WTC11 (cell line): ENCODE measurements at regions of chr14 and their contacts with region 1.

Region 1: DNA sequence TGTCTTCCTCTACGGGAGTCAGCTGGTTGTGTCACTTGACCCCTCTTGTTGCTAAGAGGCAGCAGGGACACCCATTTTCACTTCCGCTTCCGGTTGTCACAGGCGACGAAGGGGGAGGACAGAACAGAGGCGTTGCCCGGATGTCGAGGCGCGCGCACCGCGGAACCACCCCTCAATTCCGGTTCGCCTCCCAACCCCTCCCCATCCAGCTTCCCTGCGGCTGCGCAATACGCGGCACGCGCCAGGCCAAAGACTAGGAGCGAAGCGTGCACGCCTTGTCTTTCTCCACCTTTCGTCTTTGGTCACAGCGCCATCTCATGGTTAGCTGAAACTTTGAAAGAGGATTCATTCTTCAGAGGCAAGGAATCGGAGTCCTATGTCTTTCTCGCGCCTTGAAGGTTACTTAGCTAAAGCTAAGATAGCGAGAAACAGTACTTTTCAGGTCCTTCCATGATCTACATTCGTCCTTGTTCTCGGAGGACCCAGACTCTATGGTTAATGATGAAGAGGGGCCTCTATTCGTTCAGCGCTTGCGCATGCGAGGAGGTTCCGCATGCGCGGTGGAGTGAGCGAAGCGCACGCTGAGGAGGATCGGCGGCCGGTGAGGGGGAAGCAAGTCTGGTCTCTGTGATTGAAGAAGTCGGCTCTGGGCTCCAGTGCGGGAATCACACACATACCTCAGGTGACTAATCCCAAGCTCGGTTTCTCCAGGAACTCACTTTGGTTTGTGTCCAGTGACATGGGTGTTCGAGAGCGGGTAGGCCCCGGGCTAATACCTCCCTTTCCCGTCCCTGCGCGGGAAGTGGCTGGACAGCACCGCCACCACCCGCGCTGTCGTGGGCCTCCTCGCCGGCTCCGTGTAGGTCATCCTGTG is at the starts of genes ATP6V1D and EIF2S1:
- DNase-seq: peak; percentile 99
- ATAC-seq: peak; percentile 96
- H3K4me3 Mint-ChIP-seq: peak within 1 kb of the TSS; percentile 99
- H3K27ac Mint-ChIP-seq: peak within 1 kb of the TSS; percentile 97
- H3K4me1 Mint-ChIP-seq: peaks cover 23% of the 10 kb centered on the region
- H3K27me3 Mint-ChIP-seq: no peaks in the 10 kb centered on the region
- CTCF ChIP-seq: peak; percentile 54; the same call in 1 of the 2 replicates
- total RNA-seq, gene ATP6V1D: 51.1 to 54.0 TPM (median 51.4 TPM) in 3 replicates
- total RNA-seq, gene EIF2S1: 123 to 137 TPM (median 125 TPM) in 3 replicates

Region 2: GRCh38 chr14:67387195-67387594 is 27.2 kb after region 1 on chr14:
- CTCF ChIA-PET with region 1: interaction called, 15 read pairs
- POLR2A ChIA-PET with region 1: no interaction called
- DNase-seq: no peak
- ATAC-seq: no peak
- H3K4me3 Mint-ChIP-seq: no peak overlapping the region
- H3K27ac Mint-ChIP-seq: no peak overlapping the region
- H3K4me1 Mint-ChIP-seq: no peaks in the 10 kb centered on the region
- H3K27me3 Mint-ChIP-seq: no peaks in the 10 kb centered on the region
- CTCF ChIP-seq: no peak